Activated CD4-positive, alpha-beta T cell treated with anti-CD3 and anti-CD28 coated beads, Interleukin-2, amount 10 ng/mL, durations not matched to agents 24 days and 14 days (primary cell): ENCODE measurements at regions of chr5 and their contacts with region 1.

Region 1: GRCh38 chr5:87121304-87122150 is 146.2 kb upstream of the RASA1 start:
- DNase-seq: peak; percentile 82
- H3K4me3 Mint-ChIP-seq: peak overlapping the region; percentile 48
- H3K27ac Mint-ChIP-seq: peak overlapping the region; percentile 86
- H3K4me1 Mint-ChIP-seq: peaks cover 50% of the 10 kb centered on the region
- H3K27me3 Mint-ChIP-seq: no peaks in the 10 kb centered on the region

Region 2: GRCh38 chr5:86917117-86917579 is 204.4 kb before region 1 on chr5:
- intact Hi-C with region 1: loop called (anchors 2 kb)
- DNase-seq: peak; percentile 72
- H3K4me3 Mint-ChIP-seq: no peak overlapping the region
- H3K27ac Mint-ChIP-seq: no peak overlapping the region
- H3K4me1 Mint-ChIP-seq: peaks cover 8% of the 10 kb centered on the region
- H3K27me3 Mint-ChIP-seq: peaks cover 17% of the 10 kb centered on the region

Region 3: DNA sequence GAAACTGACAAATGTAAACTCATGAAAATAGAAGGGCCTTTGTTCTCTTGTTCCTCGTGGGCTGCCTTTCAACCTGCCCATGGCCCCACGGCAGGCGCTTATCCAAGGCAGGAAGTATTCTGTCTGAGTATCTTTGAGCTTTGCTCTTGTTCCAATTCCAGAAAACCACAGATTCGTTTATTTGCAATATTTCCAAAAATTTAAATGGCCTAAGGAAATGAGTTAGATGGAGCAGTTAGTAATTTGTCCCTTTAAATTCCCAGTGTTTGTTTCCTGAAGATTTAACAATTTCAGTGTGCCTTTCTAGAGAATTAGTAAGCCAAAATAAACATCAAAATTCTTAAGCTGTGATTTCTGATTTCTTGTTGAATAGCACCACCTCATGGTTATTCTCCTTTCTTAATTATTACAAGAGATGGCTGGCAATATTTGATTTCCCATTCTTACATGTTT is 153.2 kb before region 1 on chr5:
- intact Hi-C with region 1: no loop called
- DNase-seq: no peak
- H3K4me3 Mint-ChIP-seq: no peak overlapping the region
- H3K27ac Mint-ChIP-seq: no peak overlapping the region
- H3K4me1 Mint-ChIP-seq: peaks cover 4% of the 10 kb centered on the region
- H3K27me3 Mint-ChIP-seq: peaks cover 28% of the 10 kb centered on the region

Region 4: DNA sequence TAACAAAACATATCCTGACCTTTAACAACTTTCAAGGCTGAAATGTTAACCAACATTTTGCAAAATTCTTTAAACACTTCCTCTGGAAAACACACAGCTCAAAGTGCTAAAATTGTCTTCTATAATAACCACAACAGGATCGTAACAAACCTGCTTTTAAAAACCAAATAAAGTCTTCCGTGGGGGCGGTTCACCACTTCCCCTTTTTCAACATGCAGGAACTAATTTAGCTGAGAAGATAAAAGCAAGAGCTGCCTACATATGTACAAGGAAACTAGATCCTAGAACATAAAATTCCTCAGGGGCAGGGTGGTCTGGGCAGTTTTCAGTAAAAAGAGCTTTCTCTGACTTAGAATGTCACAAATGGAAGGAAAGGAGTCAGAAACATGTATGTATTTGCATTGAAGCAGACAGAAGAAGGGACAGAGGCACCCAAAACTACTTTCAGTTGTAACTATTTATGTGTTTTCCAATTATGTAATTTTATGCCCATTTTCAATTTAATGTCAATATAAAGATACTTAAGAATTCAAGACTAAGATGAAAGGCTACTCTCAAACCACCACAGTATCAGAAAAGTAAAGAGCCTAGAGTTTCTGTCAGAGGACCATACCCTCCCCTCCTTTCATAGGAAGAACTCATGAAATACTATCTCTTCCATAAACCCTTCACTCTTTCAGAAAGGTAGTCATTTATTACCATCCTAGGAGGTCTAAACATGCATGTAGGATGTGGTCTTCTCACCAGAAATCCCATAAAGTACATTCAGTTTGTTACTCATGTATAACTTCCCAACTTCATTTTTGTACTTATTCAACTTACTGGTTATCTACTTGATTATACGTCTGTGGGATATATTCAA is 39.8 kb before region 1 on chr5:
- intact Hi-C with region 1: loop called (anchors 1 kb)
- DNase-seq: peak; percentile 82
- H3K4me3 Mint-ChIP-seq: peak overlapping the region; percentile 69
- H3K27ac Mint-ChIP-seq: peak overlapping the region; percentile 79
- H3K4me1 Mint-ChIP-seq: peaks cover 35% of the 10 kb centered on the region
- H3K27me3 Mint-ChIP-seq: no peaks in the 10 kb centered on the region

Region 5: DNA sequence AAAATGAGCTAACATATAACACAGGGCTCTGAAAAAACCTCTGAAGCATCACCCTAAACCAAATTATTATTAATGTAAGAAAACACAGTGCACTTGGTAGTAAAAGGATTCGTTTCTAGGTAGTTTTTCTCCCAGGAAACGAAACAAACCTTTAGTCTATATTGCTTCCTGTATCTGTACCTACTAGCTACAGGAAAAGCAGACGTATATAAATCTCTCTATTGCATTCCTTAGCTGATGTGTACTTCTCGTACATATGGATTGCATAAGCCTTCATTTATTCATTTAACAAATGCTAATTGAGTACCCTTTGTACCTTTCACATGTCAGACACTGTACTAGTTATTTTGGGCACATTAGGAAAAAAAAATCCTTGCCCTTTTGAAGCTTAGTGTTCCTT is 61.1 kb after region 1 on chr5:
- intact Hi-C with region 1: no loop called
- DNase-seq: no peak
- H3K4me3 Mint-ChIP-seq: peak overlapping the region; percentile 5
- H3K27ac Mint-ChIP-seq: no peak overlapping the region
- H3K4me1 Mint-ChIP-seq: peaks cover 10% of the 10 kb centered on the region
- H3K27me3 Mint-ChIP-seq: no peaks in the 10 kb centered on the region

Region 6: DNA sequence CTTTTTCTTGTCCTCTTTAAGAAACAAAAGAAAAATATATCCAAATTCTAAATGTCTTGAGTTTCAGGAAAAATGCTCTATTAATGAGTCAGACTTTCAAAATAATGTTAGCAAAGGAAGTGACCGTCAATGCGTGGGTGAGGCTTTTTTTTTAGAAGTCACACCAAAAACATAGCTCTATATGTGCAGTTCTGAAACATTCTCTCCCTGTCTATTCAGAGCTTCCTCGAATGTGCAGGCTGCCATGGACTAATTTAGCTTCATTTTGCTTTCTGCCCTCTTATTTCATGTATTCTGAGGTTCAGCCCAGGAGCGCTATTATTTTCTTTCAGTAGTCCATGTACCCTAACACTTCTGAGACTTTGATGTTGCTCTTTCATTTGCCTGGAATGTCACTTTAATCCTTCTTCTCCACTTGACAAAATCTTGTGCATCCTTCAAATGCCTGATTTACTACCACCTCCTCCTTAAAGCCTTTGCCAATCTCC is 73.6 kb after region 1 on chr5:
- intact Hi-C with region 1: loop called (anchors 2 kb)
- DNase-seq: no peak
- H3K4me3 Mint-ChIP-seq: peak overlapping the region; percentile 8
- H3K27ac Mint-ChIP-seq: no peak overlapping the region
- H3K4me1 Mint-ChIP-seq: peaks cover 26% of the 10 kb centered on the region
- H3K27me3 Mint-ChIP-seq: no peaks in the 10 kb centered on the region

Region 7: DNA sequence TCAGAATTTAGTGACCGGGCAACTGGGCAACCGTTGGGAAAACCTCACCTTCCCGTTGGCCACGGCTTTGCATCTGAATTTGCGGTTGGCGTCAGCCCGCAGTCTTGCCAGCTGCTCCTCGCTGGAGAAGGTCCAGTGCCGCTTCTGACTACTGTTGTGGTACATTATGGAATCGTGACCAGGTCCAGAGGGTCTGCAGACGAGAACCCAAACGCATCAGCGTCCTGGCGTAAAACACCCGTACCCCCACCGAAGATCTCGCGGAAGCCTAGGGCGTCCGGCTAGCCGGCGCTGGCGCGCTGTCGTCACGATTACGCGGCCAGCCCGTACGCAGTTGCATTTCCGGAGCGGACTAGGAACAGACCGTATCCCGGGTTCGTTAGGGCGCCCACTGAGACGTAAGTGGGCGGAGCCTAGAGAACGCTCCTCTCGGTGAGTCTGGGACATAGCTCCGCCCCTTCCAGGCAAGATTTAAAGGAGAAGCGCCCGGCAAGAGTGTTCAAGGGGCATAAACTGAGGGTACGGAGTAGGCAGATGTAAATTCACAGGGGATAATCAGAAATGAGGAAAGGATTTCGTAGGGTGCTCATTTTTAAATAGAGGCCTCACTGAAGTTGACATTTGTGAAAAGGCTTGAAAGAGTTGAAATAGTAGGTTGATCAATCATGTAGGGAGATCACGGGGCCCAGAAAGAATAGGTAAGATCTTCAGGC is 291.3 kb after region 1 on chr5 and contains the start of gene CCNH:
- intact Hi-C with region 1: loop called (anchors 2 kb)
- DNase-seq: peak; percentile 99
- H3K4me3 Mint-ChIP-seq: peak within 1 kb of the TSS; percentile 96
- H3K27ac Mint-ChIP-seq: peak within 1 kb of the TSS; percentile 94
- H3K4me1 Mint-ChIP-seq: peaks cover 31% of the 10 kb centered on the region
- H3K27me3 Mint-ChIP-seq: peaks cover 8% of the 10 kb centered on the region
- total RNA-seq, gene CCNH: 67.2 and 75.6 TPM in 2 replicates